GM12878 (cell line): ENCODE measurements at regions of chr3 and their contacts with region 1.

Region 1: DNA sequence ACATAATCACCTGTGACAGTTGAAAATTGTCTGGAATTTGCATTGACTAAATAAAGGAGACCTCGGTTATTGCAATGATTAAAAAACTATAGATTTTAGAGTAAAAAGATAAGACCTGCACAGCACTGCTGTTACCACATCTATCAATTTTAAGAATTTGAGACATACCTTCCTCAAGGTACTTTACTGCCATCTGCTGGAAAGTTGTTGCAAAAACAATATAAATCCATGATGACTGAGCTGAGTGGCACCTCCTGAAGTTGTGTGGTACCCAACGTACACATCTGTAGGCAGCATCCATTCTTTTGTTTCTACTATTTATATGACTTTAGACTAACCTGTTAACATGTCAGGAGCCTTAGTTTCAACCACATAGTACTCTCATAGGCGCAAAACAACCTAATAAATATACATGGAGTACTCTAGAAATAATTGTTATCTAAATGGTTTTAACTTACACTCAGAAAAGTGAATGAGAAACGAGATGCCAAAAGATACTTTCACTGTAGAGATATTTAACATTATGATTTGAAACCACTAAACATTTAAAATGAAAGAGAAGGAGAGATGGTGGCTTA is 106.7 kb downstream of the GHSR start:
- DNase-seq: peak; percentile 24
- ATAC-seq: peak; percentile 92
- H3K4me3 ChIP-seq: no peak overlapping the region
- H3K27ac ChIP-seq: no peak overlapping the region
- H3K4me1 ChIP-seq: no peaks in the 10 kb centered on the region
- H3K27me3 ChIP-seq: no peaks in the 10 kb centered on the region
- CTCF ChIP-seq: peak; percentile 53 to 67 (median 59); a peak in 5 of 6 replicates
- EP300 ChIP-seq: no peak
- POLR2A ChIP-seq: no peak
- RAD21 ChIP-seq: peak; percentile 73

Region 2: GRCh38 chr3:171846597-171846996 is 495.0 kb before region 1 on chr3:
- CTCF ChIA-PET with region 1: interaction called, 6 read pairs
- POLR2A ChIA-PET with region 1: no interaction called
- RAD21 ChIA-PET with region 1: interaction called, 5 read pairs
- SMC1A ChIA-PET with region 1: no interaction called
- in situ Hi-C with region 1: no loop called
- intact Hi-C with region 1: loop called (anchors 5 kb)
- DNase-seq: peak; percentile 80
- ATAC-seq: peak; percentile 97
- H3K4me3 ChIP-seq: no peak overlapping the region
- H3K27ac ChIP-seq: no peak overlapping the region
- H3K4me1 ChIP-seq: peaks cover 13% of the 10 kb centered on the region
- H3K27me3 ChIP-seq: no peaks in the 10 kb centered on the region
- CTCF ChIP-seq: no peak
- EP300 ChIP-seq: peak; percentile 57 to 78; a peak in 2 of 4 replicates
- POLR2A ChIP-seq: no peak
- RAD21 ChIP-seq: no peak

Region 3: DNA sequence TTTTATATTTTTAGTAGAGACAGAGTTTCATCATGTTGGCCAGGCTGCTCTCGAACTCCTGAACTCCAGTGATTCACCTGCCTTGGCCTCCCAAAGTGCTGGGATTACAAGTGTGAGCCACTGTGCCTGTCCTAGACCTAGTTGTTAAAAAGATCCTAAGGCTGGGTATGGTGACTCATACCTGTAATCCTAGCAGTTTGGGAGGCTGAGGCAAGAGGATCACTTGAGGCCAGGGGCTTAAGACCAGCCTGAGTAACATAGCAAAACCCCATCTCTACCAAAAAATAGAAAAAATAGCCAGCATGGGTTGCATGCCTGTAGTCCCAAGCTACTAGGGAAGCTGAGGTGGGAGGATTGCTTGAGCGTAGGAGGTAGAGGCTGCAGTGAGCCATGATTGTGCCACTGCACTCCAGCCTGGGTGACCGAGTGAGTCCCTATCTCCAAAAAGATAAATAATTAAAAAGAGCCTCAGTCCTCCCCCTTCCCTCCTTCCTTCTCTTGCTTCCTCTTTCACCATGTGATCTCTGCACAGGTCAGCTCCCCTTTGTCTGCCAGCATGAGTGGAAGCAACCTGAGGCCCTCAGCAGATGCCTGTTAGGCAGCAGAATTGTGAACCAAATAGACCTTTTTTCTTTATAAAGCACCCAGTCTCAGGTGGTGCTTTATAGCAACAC is 312.0 kb before region 1 on chr3:
- CTCF ChIA-PET with region 1: interaction called, 11 read pairs
- POLR2A ChIA-PET with region 1: no interaction called
- RAD21 ChIA-PET with region 1: interaction called, 4 read pairs
- SMC1A ChIA-PET with region 1: interaction called, 4 read pairs
- in situ Hi-C with region 1: no loop called
- intact Hi-C with region 1: no loop called
- DNase-seq: no peak
- ATAC-seq: peak; percentile 59
- H3K4me3 ChIP-seq: no peak overlapping the region
- H3K27ac ChIP-seq: no peak overlapping the region
- H3K4me1 ChIP-seq: no peaks in the 10 kb centered on the region
- H3K27me3 ChIP-seq: no peaks in the 10 kb centered on the region
- CTCF ChIP-seq: no peak
- EP300 ChIP-seq: no peak
- POLR2A ChIP-seq: no peak
- RAD21 ChIP-seq: no peak